ENCODE measurements at regions of chr9 and their contacts with region 1.

Region 1: GRCh38 chr9:123150708-123151503 is 117.4 kb downstream of the GPR21 start:
- DNase-seq: no peak
- CTCF ChIP-seq: no peak

Region 2: DNA sequence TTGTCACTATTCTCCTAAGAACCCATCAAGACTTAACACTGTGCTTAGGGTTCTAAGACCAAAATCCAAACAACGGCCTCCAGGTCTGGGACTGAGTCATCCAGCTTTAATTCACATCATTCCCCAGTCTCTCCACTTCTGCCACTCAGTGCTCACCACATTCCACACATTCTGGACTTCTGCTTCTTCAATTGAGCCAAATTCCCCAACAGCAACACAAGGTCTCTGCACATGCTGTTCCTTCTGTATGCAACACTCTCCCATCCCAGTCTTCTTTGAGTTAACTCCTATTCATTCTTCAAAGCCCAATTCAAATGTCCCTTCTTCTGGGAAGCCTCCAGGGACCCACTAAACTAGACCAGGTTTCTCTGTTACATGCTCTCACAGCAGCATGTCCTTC is 19.6 kb before region 1 on chr9:
- CTCF ChIA-PET with region 1: no interaction called
- POLR2A ChIA-PET with region 1: no interaction called
- DNase-seq: no peak
- CTCF ChIP-seq: no peak

Region 3: GRCh38 chr9:123162359-123163345 is 11.7 kb after region 1 on chr9:
- CTCF ChIA-PET with region 1: interaction called, 11 read pairs
- POLR2A ChIA-PET with region 1: no interaction called
- DNase-seq: no peak
- CTCF ChIP-seq: no peak

Measured in GM10248 (cell line).